CD4-positive, alpha-beta T cell (primary cell): ENCODE measurements at regions of chr1 and their contacts with region 1.

Region 1: DNA sequence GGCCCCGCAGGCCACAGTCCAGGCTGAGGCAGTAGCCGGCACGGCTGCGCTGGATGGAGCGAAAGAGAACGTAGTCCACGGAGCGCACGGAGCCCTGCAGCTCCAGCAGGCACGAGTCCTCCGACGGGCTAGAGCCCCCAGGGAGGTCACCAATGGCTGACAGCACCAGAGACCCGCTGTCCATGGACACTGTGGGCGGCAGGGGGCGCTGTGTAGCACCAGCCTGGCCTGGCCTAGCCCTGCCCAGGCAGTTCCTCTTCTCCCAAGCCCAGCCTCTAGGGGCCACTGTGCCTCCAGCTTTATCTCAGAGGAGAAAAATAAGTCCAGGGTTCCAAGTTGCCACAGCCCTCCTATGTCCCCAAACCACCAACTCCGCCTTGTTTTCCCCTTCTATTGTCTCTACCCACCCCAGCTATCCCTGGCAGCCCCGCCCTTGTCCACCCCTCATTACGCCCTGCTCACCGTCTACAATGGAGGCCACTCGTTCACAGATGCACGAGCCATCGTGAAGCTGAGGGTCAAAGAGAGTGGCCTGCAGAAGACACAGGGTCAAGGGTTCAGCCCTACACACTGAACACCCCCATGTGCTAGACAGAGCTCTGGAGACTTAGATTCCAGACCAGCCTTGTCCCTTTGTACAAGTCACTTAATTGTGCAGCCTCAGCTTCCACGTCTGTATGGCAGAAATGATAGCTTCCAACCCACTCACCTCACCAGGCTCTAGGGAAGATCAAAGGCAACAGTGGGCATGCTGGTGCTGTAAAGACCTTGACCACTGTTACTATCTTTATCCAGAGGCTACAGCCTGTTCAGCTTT is 4.4 kb downstream of the ENTREP3 start:
- DNase-seq: peak; percentile 93 to 98 (median 96)
- ATAC-seq: peak; percentile 96
- H3K4me3 ChIP-seq: peak overlapping the region; percentile 60
- H3K4me3 Mint-ChIP-seq: peak overlapping the region; percentile 67
- H3K27ac ChIP-seq: no peak overlapping the region
- H3K27ac Mint-ChIP-seq: peak overlapping the region; percentile 16
- H3K4me1 ChIP-seq: peaks cover 37% of the 10 kb centered on the region
- H3K4me1 Mint-ChIP-seq: peaks cover 23% of the 10 kb centered on the region
- H3K27me3 ChIP-seq: no peaks in the 10 kb centered on the region
- H3K27me3 Mint-ChIP-seq: no peaks in the 10 kb centered on the region
- CTCF ChIP-seq: peak; percentile 100

Region 2: GRCh38 chr1:155261852-155262673 is 11.2 kb after region 1 on chr1 and contains the start of gene SCAMP3:
- CTCF ChIA-PET with region 1: interaction called, 47 read pairs
- POLR2A ChIA-PET with region 1: interaction called, 40 read pairs
- intact Hi-C with region 1: no loop called
- DNase-seq: peak; percentile 62 to 95 (median 79)
- ATAC-seq: peak; percentile 93
- H3K4me3 ChIP-seq: peak within 1 kb of the TSS; percentile 100
- H3K4me3 Mint-ChIP-seq: peak within 1 kb of the TSS; percentile 95
- H3K27ac ChIP-seq: peak within 1 kb of the TSS; percentile 71 to 72
- H3K27ac Mint-ChIP-seq: peak within 1 kb of the TSS; percentile 82
- H3K4me1 ChIP-seq: peaks cover 28% of the 10 kb centered on the region
- H3K4me1 Mint-ChIP-seq: peaks cover 40% of the 10 kb centered on the region
- H3K27me3 ChIP-seq: no peaks in the 10 kb centered on the region
- H3K27me3 Mint-ChIP-seq: no peaks in the 10 kb centered on the region
- CTCF ChIP-seq: no peak
- total RNA-seq, gene SCAMP3: 54.8 to 55.6 TPM

Region 3: DNA sequence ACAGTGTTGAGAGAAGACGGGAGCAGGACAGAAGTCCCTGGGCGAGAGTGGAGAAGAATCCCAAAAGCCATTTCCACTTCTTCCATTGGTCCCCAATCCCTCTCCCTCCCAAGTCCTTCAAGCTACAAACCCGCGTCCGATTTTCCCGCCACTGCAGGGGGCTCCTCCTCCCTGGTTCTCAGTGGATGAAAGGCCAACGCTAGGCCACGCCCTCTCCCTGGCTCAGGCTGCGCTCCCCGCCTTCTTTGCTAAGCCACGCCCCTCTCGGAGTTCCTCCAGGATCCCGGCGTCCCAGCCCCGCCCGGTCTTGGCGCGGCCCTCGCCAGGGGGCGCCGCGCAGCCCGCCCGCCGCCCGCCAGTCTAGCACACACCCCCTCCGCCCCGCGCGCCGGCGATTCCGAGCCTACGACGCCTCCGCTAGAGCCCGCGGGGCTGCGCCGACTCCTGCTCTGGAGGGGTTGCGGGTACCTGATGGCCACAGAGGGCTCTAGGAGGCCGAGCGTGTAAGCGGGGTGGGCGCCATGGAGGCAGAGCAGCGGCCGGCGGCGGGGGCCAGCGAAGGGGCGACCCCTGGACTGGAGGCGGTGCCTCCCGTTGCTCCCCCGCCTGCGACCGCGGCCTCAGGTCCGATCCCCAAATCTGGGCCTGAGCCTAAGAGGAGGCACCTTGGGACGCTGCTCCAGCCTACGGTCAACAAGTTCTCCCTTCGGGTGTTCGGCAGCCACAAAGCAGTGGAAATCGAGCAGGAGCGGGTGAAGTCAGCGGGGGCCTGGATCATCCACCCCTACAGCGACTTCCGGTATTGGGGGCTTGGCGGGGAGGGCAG is 26.4 kb after region 1 on chr1 and contains the start of gene HCN3:
- CTCF ChIA-PET with region 1: interaction called, 22 read pairs
- POLR2A ChIA-PET with region 1: interaction called, 12 read pairs
- intact Hi-C with region 1: loop called in 1 of 2 experiments (anchors 2 kb)
- DNase-seq: peak; percentile 70 to 99 (median 90)
- ATAC-seq: peak; percentile 31
- H3K4me3 ChIP-seq: peak within 1 kb of the TSS; percentile 61
- H3K4me3 Mint-ChIP-seq: peak within 1 kb of the TSS; percentile 82
- H3K27ac ChIP-seq: peak within 1 kb of the TSS; percentile 13 to 29
- H3K27ac Mint-ChIP-seq: peak within 1 kb of the TSS; percentile 65
- H3K4me1 ChIP-seq: peaks cover 35% of the 10 kb centered on the region
- H3K4me1 Mint-ChIP-seq: peaks cover 43% of the 10 kb centered on the region
- H3K27me3 ChIP-seq: no peaks in the 10 kb centered on the region
- H3K27me3 Mint-ChIP-seq: no peaks in the 10 kb centered on the region
- CTCF ChIP-seq: peak; percentile 59
- total RNA-seq, gene HCN3: 1.3 to 1.8 TPM

Region 4: DNA sequence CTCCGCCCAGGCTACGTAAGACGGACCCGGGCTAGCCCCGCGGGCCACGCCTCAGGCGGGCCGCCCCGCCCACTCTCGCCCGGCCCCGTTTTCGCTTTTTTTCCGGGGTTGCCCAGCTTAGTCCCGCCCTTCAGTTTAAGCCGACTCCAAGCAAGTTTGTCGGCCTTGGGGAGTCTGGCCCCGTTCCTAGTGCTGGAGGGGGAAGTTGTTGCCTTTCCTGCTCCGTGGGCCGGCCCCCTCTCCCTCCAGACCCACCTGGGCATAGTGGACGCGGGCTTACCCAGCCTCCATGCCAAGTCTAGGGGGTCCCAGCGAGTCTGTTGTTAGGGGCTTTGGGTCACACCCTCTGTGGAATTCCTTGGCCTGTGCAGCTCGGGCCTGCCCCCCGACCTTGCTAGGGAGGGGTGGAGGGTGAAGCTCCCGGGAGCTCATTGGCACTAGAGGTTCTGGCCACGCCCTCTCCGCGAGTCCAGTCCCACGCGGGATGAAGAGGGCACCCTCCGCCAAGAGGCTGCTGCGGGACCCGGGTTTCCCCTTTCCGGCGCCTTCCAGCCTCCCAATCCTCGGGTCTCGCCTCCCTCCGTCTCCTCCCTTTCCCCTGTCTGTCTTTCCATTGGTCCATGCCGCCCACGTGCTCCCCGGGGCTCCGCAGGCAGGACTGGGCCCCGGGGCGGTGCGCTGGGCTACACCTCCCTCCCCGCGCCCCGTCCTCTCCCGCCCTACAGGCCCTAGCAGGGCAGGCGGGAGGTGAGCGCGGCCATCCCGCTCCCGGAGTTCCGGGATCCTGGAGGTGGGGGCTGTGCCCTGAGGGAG is 73.2 kb after region 1 on chr1:
- CTCF ChIA-PET with region 1: interaction called, 114 read pairs
- POLR2A ChIA-PET with region 1: interaction called, 51 read pairs
- intact Hi-C with region 1: loop called (anchors 1 kb)
- DNase-seq: peak; percentile 69 to 94 (median 80)
- ATAC-seq: peak; percentile 79
- H3K4me3 ChIP-seq: peak overlapping the region; percentile 100
- H3K4me3 Mint-ChIP-seq: peak overlapping the region; percentile 92
- H3K27ac ChIP-seq: peak overlapping the region; percentile 93 to 97
- H3K27ac Mint-ChIP-seq: peak overlapping the region; percentile 69
- H3K4me1 ChIP-seq: peaks cover 49% of the 10 kb centered on the region
- H3K4me1 Mint-ChIP-seq: peaks cover 46% of the 10 kb centered on the region
- H3K27me3 ChIP-seq: no peaks in the 10 kb centered on the region
- H3K27me3 Mint-ChIP-seq: no peaks in the 10 kb centered on the region
- CTCF ChIP-seq: no peak

Region 5: DNA sequence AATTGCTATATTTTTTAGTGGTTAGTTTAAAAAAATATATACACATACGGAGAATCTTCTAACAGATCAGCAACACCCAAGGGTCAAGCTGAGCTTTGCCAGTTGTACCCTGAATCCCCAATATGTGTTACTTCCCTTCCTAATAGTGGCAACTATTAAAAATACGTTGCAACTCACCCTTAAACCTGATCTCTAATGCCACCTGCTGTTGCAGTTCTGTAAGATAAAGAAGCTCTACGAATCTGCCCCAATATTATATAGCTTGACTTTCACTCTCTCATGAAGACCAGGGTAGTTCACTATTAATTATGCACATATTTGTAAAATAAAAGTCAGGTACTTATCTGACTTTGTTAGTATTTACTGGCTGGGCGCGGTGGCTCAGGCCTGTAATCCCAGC is 253.4 kb after region 1 on chr1:
- CTCF ChIA-PET with region 1: interaction called, 5 read pairs
- POLR2A ChIA-PET with region 1: interaction called, 3 read pairs
- intact Hi-C with region 1: loop called in 1 of 2 experiments (anchors 10 kb)
- DNase-seq: peak in 3 of 14 experiments; percentile 43 to 56 (median 56)
- ATAC-seq: peak; percentile 70
- H3K4me3 ChIP-seq: no peak overlapping the region
- H3K4me3 Mint-ChIP-seq: no peak overlapping the region
- H3K27ac ChIP-seq: no peak overlapping the region
- H3K27ac Mint-ChIP-seq: peak overlapping the region; percentile 6
- H3K4me1 ChIP-seq: peaks cover 16% of the 10 kb centered on the region
- H3K4me1 Mint-ChIP-seq: peaks cover 49% of the 10 kb centered on the region
- H3K27me3 ChIP-seq: no peaks in the 10 kb centered on the region
- H3K27me3 Mint-ChIP-seq: no peaks in the 10 kb centered on the region
- CTCF ChIP-seq: no peak

Region 6: DNA sequence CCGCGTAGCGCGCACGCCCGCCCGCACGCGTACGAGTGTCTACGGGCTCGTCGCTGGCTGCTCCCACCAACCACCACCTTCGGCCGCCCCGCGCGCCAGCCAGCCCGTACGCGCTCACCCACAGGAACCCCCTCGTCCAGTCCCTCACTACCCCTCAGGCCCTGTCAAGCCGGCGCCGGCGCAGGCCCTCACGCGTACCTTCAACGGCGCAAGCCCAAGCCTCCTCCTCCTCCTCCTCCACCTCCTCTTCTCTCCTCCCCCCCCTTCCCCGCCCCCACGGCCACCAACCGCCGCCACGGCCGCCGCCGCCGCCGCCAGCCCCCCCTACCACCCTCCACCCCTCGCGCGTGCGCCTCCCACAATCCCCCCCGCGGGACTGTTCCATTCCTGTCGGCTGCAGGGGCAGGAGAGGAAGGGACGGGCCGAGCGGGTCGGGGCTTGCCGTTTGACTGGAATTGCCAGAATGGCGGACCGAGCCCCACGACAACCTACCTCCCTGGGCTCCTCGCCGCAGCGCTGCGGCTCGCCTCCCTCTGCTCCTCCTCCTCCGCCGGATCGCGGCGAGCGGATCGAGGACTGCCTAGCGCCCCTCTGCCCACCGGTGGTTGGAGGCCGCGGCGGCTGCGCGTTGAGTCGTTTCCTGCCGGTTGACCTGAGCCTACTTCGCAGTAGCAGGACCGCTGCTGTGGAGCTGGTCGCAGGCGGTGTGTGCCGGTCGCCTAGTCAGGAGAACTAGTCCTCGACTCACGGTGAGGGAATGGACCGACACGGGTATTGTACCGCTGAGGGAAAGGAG is 311.9 kb after region 1 on chr1 and contains the start of gene ASH1L:
- CTCF ChIA-PET with region 1: no interaction called
- POLR2A ChIA-PET with region 1: no interaction called
- intact Hi-C with region 1: no loop called
- DNase-seq: peak; percentile 89 to 96 (median 92)
- ATAC-seq: peak; percentile 71
- H3K4me3 ChIP-seq: peak within 1 kb of the TSS; percentile 81
- H3K4me3 Mint-ChIP-seq: peak within 1 kb of the TSS; percentile 99
- H3K27ac ChIP-seq: peak within 1 kb of the TSS; percentile 95 to 96
- H3K27ac Mint-ChIP-seq: peak within 1 kb of the TSS; percentile 94
- H3K4me1 ChIP-seq: peaks cover 39% of the 10 kb centered on the region
- H3K4me1 Mint-ChIP-seq: peaks cover 51% of the 10 kb centered on the region
- H3K27me3 ChIP-seq: no peaks in the 10 kb centered on the region
- H3K27me3 Mint-ChIP-seq: no peaks in the 10 kb centered on the region
- CTCF ChIP-seq: no peak
- total RNA-seq, gene ASH1L: 71.0 to 72.8 TPM